ENCODE measurements at regions of chr17 and their contacts with region 1.

Region 1: DNA sequence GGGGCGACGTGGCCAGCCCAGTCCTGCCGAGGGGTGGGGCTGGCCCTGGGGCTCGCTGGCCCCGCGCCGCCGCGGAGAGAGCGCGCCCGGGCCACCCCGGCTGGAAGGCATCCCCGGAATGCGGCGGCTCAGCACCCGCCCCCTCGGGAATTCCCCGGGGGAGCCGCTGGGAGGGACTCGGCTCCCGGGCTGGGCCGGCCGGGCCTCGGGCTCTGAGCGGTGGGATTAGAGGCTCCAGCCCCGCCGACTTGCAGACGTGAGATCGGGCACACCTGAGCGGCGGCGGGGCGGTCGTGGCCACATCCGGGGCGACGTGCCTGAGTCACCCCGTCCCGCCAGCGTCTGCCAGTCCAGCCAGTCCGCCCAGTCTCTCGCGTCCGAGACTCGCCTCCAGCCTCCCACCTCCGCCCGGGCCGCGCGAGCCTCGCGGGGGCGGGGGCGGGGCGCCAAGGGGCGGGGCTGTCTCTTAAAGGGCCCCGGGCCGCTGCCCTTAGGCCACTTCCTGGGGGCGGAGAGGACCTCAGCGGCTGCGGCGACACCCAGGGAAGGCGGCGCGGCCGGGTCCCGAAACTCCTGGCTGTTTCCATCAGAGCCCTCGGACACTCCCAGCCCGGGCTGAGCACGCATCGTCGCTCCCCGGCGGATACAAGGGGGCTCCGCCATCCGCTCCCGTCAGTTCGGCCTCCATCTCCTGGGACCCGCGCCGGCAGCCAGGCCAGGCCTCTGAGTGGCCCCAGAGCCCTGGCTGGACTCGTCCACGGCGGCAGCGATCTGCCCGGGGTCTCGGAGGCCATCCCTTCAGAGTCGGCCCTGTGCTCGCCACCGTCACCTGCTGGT is at the start of gene KCTD11:
- DNase-seq: peak; percentile 46 to 89
- H3K4me3 ChIP-seq: peak within 1 kb of the TSS; percentile 39 to 96 (median 84)
- H3K27ac ChIP-seq: peak within 1 kb of the TSS; percentile 66; the same call in 1 of the 2 replicates
- H3K4me1 ChIP-seq: peaks cover 0 to 19% (median 10%) of the 10 kb centered on the region in 4 experiments; a peak in 6 of 7 replicates
- H3K27me3 ChIP-seq: no peaks in the 10 kb centered on the region
- CTCF ChIP-seq: peak in 2 of 3 experiments; percentile 70 to 73; a peak in 2 of 4 replicates
- EP300 ChIP-seq: peak in 1 of 2 experiments; percentile 80; a peak in 2 of 3 replicates
- POLR2A ChIP-seq: peak in 1 of 2 experiments; percentile 82; a peak in 2 of 3 replicates
- RAD21 ChIP-seq: peak; percentile 24 to 48; a peak in 3 of 4 replicates
- total RNA-seq, gene KCTD11: 8.7 and 9.2 TPM in 2 replicates

Region 2: GRCh38 chr17:7329374-7329996 is 22.4 kb before region 1 on chr17:
- CTCF ChIA-PET with region 1: interaction called, 167 read pairs
- POLR2A ChIA-PET with region 1: interaction called, 78 read pairs
- DNase-seq: peak; percentile 95 to 99
- H3K4me3 ChIP-seq: peak overlapping the region; percentile 69 to 97 (median 82)
- H3K27ac ChIP-seq: peak overlapping the region; percentile 84
- H3K4me1 ChIP-seq: peaks cover 0 to 19% (median 8%) of the 10 kb centered on the region in 4 experiments; a peak in 6 of 7 replicates
- H3K27me3 ChIP-seq: no peaks in the 10 kb centered on the region; a peak in 1 of 7 replicates
- CTCF ChIP-seq: no peak
- EP300 ChIP-seq: no peak; a peak in 1 of 3 replicates
- POLR2A ChIP-seq: peak in 1 of 2 experiments; percentile 80; a peak in 2 of 3 replicates
- RAD21 ChIP-seq: peak in 1 of 2 experiments; percentile 3; a peak in 1 of 4 replicates

Region 3: GRCh38 chr17:7367083-7367482 is 15.2 kb after region 1 on chr17:
- CTCF ChIA-PET with region 1: interaction called, 16 read pairs
- POLR2A ChIA-PET with region 1: interaction called, 10 read pairs
- DNase-seq: no peak
- H3K4me3 ChIP-seq: no peak overlapping the region
- H3K27ac ChIP-seq: no peak overlapping the region
- H3K4me1 ChIP-seq: peaks cover 0 to 11% (median 4%) of the 10 kb centered on the region in 4 experiments; a peak in 5 of 7 replicates
- H3K27me3 ChIP-seq: no peaks in the 10 kb centered on the region
- CTCF ChIP-seq: no peak
- EP300 ChIP-seq: no peak
- POLR2A ChIP-seq: no peak
- RAD21 ChIP-seq: no peak

Region 4: DNA sequence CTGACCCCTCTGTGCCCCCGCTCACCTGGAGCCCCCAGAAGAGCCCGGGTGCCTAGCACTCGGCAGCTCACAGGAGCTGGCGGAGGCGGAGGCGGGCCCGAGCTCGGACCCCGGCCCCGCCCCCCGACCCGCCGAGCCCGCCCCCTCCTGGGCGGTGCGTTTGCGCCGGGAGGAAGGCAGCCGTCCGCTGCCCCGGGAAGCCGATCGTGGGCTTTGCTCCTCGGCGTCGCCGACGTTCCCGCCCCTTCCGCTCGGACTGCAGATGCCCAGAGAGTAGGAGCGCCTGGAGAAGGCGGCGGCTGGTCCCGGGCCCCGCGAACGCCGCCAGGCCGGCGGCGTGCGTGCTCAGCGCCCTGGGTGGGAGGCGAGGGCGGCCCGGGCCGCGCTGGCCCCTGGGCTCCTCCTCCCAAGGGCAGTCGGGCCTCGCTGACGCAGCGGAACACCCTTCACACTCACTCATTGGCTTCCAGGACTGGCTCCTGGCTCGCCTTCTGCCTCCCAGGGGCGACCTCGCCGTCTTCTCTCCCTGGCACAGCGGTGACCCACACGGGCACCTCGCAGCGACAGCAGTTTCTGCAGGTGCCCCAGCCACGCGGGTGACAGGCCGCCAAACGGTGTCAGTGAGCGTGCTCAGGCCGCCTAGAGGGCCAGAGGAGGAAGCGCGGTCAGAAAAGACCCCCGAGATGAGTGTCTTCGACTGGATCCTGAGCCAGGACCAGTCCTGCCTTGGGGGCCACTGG is 42.7 kb after region 1 on chr17 and contains the start of gene PLSCR3:
- CTCF ChIA-PET with region 1: interaction called, 14 read pairs
- POLR2A ChIA-PET with region 1: no interaction called
- DNase-seq: peak in 1 of 2 experiments; percentile 93
- H3K4me3 ChIP-seq: peak within 1 kb of the TSS; percentile 69 to 83 (median 72)
- H3K27ac ChIP-seq: no peak within 1 kb of the TSS
- H3K4me1 ChIP-seq: peaks cover 0 to 9% (median 3%) of the 10 kb centered on the region in 4 experiments; a peak in 6 of 7 replicates
- H3K27me3 ChIP-seq: no peaks in the 10 kb centered on the region
- CTCF ChIP-seq: peak; percentile 40 to 57 (median 52)
- EP300 ChIP-seq: no peak
- POLR2A ChIP-seq: peak in 1 of 2 experiments; percentile 62; a peak in 1 of 3 replicates
- RAD21 ChIP-seq: 0 out of 4 replicates have a peak, but pooled peaks have one; percentile 11 to 26
- total RNA-seq, gene PLSCR3: 35.7 and 38.7 TPM in 2 replicates

Region 5: GRCh38 chr17:7435221-7435675 is 83.4 kb after region 1 on chr17 and contains the start of gene TMEM102:
- CTCF ChIA-PET with region 1: interaction called, 56 read pairs
- POLR2A ChIA-PET with region 1: interaction called, 15 read pairs
- DNase-seq: peak; percentile 96 to 99
- H3K4me3 ChIP-seq: peak within 1 kb of the TSS; percentile 50 to 83 (median 67)
- H3K27ac ChIP-seq: peak within 1 kb of the TSS; percentile 59
- H3K4me1 ChIP-seq: peaks cover 0 to 22% (median 8%) of the 10 kb centered on the region in 4 experiments; a peak in 6 of 7 replicates
- H3K27me3 ChIP-seq: peaks cover 2 to 19% (median 12%) of the 10 kb centered on the region in 4 experiments; a peak in 6 of 7 replicates
- CTCF ChIP-seq: no peak
- EP300 ChIP-seq: no peak
- POLR2A ChIP-seq: 0 out of 3 replicates have a peak, but pooled peaks of 1 of the 2 experiments have one; percentile 21
- RAD21 ChIP-seq: no peak
- total RNA-seq, gene TMEM102: 11.2 and 12.2 TPM in 2 replicates

Region 6: DNA sequence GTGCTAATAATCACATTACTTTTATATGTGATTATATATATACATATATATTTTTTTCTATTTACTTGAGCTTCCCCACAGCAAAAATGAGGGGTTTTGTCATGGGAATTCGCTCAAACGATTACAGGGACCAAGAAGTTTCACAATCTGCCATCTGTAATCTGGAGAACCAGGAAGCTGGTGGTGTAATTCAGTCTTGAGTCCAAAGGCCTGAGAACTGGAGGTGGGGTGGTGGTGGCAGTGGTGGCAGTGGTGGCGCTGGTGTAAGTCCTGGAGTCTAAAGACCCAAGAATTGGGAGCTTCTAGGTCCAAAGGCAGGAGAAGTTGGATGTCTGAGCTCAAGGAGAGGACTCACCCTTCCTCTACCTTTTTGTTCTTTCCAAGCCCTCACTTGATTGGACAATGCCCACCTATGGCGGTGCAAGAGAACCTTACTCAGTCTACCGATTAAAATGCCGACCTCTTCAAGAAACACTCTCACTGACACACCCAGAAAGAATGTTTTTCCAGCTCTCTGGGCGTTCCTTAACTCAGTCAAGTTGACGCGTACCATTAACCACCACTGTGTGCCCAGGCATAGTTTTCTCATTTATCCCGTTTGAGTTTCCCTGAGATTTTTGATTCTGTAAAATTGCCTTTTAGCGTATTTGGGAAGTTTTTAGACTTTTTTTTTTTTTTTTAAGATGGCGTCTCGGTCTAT is 164.2 kb after region 1 on chr17:
- CTCF ChIA-PET with region 1: interaction called, 20 read pairs
- POLR2A ChIA-PET with region 1: no interaction called
- DNase-seq: no peak
- H3K4me3 ChIP-seq: no peak overlapping the region
- H3K27ac ChIP-seq: no peak overlapping the region
- H3K4me1 ChIP-seq: no peaks in the 10 kb centered on the region
- H3K27me3 ChIP-seq: no peaks in the 10 kb centered on the region
- CTCF ChIP-seq: no peak
- EP300 ChIP-seq: no peak
- POLR2A ChIP-seq: no peak
- RAD21 ChIP-seq: no peak